Dendritic cell treated with granulocyte-macrophage colony-stimulating factor and Interleukin-4, amounts not matched to agents 40 ng/mL and 50 ng/mL, for 4 days (primary cell): ENCODE measurements at regions of chr3 and their contacts with region 1.

Region 1: DNA sequence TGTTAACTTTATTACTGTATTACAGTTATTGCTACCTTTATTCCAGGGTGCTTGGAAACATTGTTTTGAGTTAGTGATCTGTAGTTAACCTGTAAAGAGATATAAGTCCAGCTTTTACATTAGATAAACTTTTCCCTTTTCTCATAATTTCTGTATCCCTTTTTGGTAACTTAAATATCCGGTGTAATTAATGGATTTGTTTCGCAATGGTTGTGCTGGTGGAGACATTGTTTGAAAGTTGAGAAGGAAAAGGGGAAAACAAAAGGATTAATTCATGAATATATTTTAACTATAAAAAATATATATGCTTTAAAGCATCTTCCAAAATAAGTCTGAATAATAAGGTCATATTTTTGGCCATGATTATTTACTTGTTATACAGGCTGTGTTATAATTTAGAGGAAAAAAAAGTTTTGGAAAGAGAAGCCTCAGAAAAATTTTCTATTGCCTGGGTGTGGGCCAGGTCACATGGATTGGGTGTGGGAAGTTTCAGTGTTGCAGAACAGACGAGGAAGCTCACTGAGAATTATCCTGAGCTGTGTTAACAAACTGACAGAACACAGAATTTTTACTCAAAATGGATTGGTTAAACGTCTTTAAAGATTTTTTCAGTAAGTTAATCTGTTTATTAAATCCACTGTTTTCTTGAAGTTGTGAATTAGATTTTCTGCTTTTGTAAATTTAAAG is 27.7 kb upstream of the IL20RB start:
- H3K4me3 Mint-ChIP-seq: peak overlapping the region; percentile 64
- H3K27ac Mint-ChIP-seq: peak overlapping the region; percentile 87
- H3K4me1 Mint-ChIP-seq: peaks cover 43% of the 10 kb centered on the region
- H3K27me3 Mint-ChIP-seq: no peaks in the 10 kb centered on the region

Region 2: DNA sequence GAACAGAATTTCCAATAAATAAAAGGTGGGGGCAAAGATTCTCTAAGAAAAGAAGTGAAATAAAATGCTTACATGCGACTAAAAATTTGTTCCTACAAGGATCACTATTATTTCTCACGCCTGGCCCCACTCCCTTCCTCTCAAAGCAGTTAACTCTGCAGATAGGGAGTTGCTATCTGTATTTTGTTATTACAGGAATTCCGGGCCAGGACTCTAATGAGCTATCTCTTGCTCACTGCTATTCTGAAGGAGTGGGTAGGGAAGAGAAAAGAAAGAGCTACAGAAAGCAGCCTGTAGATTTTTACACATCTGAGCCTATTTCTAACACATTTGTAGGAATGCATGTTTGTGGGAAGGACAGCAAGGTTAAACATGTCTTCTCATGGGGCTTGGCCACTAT is 539.6 kb before region 1 on chr3:
- intact Hi-C with region 1: loop called (anchors 5 kb)
- H3K4me3 Mint-ChIP-seq: no peak overlapping the region
- H3K27ac Mint-ChIP-seq: no peak overlapping the region
- H3K4me1 Mint-ChIP-seq: no peaks in the 10 kb centered on the region
- H3K27me3 Mint-ChIP-seq: no peaks in the 10 kb centered on the region

Region 3: GRCh38 chr3:136617198-136617597 is 312.9 kb before region 1 on chr3:
- intact Hi-C with region 1: no loop called
- H3K4me3 Mint-ChIP-seq: no peak overlapping the region
- H3K27ac Mint-ChIP-seq: peak overlapping the region; percentile 89
- H3K4me1 Mint-ChIP-seq: peaks cover 41% of the 10 kb centered on the region
- H3K27me3 Mint-ChIP-seq: no peaks in the 10 kb centered on the region

Region 4: GRCh38 chr3:136861890-136862616 is 68.1 kb before region 1 on chr3 and contains the start of gene NCK1:
- intact Hi-C with region 1: loop called (anchors 5 kb)
- H3K4me3 Mint-ChIP-seq: peak within 1 kb of the TSS; percentile 97
- H3K27ac Mint-ChIP-seq: peak within 1 kb of the TSS; percentile 98
- H3K4me1 Mint-ChIP-seq: peaks cover 46% of the 10 kb centered on the region
- H3K27me3 Mint-ChIP-seq: no peaks in the 10 kb centered on the region

Region 5: GRCh38 chr3:136882572-136882971 is 47.6 kb before region 1 on chr3:
- intact Hi-C with region 1: loop called (anchors 10 kb)
- H3K4me3 Mint-ChIP-seq: no peak overlapping the region
- H3K27ac Mint-ChIP-seq: no peak overlapping the region
- H3K4me1 Mint-ChIP-seq: peaks cover 64% of the 10 kb centered on the region
- H3K27me3 Mint-ChIP-seq: no peaks in the 10 kb centered on the region